K562 (cell line): ENCODE measurements at regions of chr4 and their contacts with region 1.

Region 1: GRCh38 chr4:153318696-153319320 is 25.7 kb upstream of the MND1 start:
- DNase-seq: peak; percentile 18 to 51 (median 34)
- ATAC-seq: peak; percentile 90
- H3K4me3 ChIP-seq: no peak overlapping the region
- H3K27ac ChIP-seq: no peak overlapping the region
- H3K4me1 ChIP-seq: no peaks in the 10 kb centered on the region
- H3K27me3 ChIP-seq: peaks cover 4 to 11% of the 10 kb centered on the region in 2 experiments; a peak in 4 of 5 replicates
- CTCF ChIP-seq: peak; percentile 46 to 74 (median 55); a peak in 3 of 6 replicates
- EP300 ChIP-seq: no peak
- POLR2A ChIP-seq: no peak
- RAD21 ChIP-seq: peak; percentile 48 to 71

Region 2: GRCh38 chr4:152843481-152844090 is 475.2 kb before region 1 on chr4:
- CTCF ChIA-PET with region 1: interaction called, 4 read pairs
- POLR2A ChIA-PET with region 1: no interaction called
- in situ Hi-C with region 1: loop called (anchors 25 kb)
- intact Hi-C with region 1: no loop called
- DNase-seq: no peak
- ATAC-seq: no peak
- H3K4me3 ChIP-seq: no peak overlapping the region
- H3K27ac ChIP-seq: no peak overlapping the region
- H3K4me1 ChIP-seq: no peaks in the 10 kb centered on the region
- H3K27me3 ChIP-seq: no peaks in the 10 kb centered on the region
- CTCF ChIP-seq: no peak
- EP300 ChIP-seq: no peak
- POLR2A ChIP-seq: no peak
- RAD21 ChIP-seq: no peak

Region 3: DNA sequence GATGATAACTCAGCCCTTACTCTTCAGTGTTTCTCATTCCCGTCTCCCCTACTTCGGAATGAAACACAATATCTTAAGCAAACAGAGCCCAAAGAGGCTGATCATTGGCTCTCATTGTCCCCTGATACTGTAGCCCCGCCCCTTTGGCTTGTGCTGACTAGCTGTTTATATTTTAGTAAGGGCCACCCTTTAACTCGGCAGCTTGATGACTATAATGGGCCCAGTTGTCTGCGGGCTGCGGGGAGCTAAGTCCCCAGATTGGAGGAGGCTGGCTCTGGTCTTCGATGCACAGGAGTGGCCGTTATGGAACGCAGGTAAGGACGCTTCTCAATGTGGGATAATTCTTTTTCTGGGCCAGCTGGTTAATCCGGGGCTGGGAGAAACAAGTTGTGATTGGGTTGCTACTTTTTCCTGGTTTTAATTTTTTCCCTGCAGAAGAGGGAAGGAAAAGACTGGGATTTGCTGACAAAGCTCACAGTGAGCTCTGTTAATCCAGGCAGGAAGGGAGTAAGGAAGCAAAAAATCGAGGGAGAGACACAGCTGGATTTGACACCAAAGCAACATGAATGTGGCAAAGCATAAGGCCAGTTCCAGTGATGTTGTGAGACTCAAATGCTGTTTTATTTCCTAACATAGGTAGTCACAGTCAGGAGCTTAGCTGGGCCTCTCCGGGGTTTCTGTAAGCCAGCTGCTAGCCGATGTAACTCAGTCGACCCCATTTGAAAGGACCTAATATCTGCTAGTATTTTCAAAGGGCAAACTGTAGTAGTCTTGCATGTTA is 114.4 kb before region 1 on chr4 and contains the start of gene TRIM2:
- CTCF ChIA-PET with region 1: no interaction called
- POLR2A ChIA-PET with region 1: no interaction called
- in situ Hi-C with region 1: no loop called
- intact Hi-C with region 1: loop called (anchors 5 kb)
- DNase-seq: peak; percentile 59 to 73 (median 65)
- ATAC-seq: peak; percentile 86
- H3K4me3 ChIP-seq: no peak within 1 kb of the TSS
- H3K27ac ChIP-seq: no peak within 1 kb of the TSS
- H3K4me1 ChIP-seq: peaks cover 5% of the 10 kb centered on the region in 2 experiments
- H3K27me3 ChIP-seq: peaks cover 4 to 19% of the 10 kb centered on the region in 2 experiments; a peak in 3 of 5 replicates
- CTCF ChIP-seq: no peak
- EP300 ChIP-seq: no peak
- POLR2A ChIP-seq: no peak
- RAD21 ChIP-seq: no peak
- polyA plus RNA-seq, gene TRIM2: 0.01 TPM

Region 4: GRCh38 chr4:153232768-153233167 is 86.0 kb before region 1 on chr4:
- CTCF ChIA-PET with region 1: no interaction called
- POLR2A ChIA-PET with region 1: no interaction called
- in situ Hi-C with region 1: no loop called
- intact Hi-C with region 1: loop called (anchors 2 kb)
- DNase-seq: peak in 2 of 4 experiments; percentile 32 to 35
- ATAC-seq: peak; percentile 97
- H3K4me3 ChIP-seq: no peak overlapping the region
- H3K27ac ChIP-seq: no peak overlapping the region
- H3K4me1 ChIP-seq: no peaks in the 10 kb centered on the region
- H3K27me3 ChIP-seq: peaks cover 16 to 23% of the 10 kb centered on the region in 2 experiments
- CTCF ChIP-seq: peak; percentile 51 to 55 (median 54)
- EP300 ChIP-seq: no peak
- POLR2A ChIP-seq: no peak
- RAD21 ChIP-seq: peak; percentile 29 to 57; a peak in 2 of 4 replicates

Region 5: GRCh38 chr4:153890761-153891160 is 572.0 kb after region 1 on chr4:
- CTCF ChIA-PET with region 1: no interaction called
- POLR2A ChIA-PET with region 1: no interaction called
- in situ Hi-C with region 1: no loop called
- intact Hi-C with region 1: no loop called
- DNase-seq: no peak
- ATAC-seq: no peak
- H3K4me3 ChIP-seq: no peak overlapping the region
- H3K27ac ChIP-seq: no peak overlapping the region
- H3K4me1 ChIP-seq: no peaks in the 10 kb centered on the region
- H3K27me3 ChIP-seq: no peaks in the 10 kb centered on the region
- CTCF ChIP-seq: no peak
- EP300 ChIP-seq: no peak
- POLR2A ChIP-seq: no peak
- RAD21 ChIP-seq: no peak